ENCODE measurements at regions of chr15 and their contacts with region 1.

Region 1: DNA sequence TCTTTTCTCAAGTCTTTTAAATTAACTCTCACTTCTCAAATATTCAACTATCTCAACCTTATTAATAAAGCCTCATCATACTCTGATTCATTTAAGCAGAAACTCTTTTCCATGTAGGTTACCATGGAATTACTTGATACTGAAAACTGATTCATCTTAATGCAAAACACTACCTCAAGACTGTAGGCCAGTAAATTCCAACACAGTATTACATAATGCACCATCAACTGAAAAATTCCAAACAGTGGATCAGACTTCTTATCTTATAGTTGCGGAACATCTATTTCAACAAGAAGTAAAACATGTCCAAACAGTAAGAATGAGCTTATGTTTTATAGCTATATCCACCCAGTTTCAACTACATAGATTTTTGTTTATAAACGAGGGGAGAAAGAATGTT is 124.5 kb downstream of the PEAK1 start:
- DNase-seq: no peak
- ATAC-seq: no peak
- H3K4me3 ChIP-seq: no peak overlapping the region
- H3K27ac ChIP-seq: no peak overlapping the region
- H3K4me1 ChIP-seq: no peaks in the 10 kb centered on the region
- H3K27me3 ChIP-seq: no peaks in the 10 kb centered on the region
- CTCF ChIP-seq: no peak

Region 2: DNA sequence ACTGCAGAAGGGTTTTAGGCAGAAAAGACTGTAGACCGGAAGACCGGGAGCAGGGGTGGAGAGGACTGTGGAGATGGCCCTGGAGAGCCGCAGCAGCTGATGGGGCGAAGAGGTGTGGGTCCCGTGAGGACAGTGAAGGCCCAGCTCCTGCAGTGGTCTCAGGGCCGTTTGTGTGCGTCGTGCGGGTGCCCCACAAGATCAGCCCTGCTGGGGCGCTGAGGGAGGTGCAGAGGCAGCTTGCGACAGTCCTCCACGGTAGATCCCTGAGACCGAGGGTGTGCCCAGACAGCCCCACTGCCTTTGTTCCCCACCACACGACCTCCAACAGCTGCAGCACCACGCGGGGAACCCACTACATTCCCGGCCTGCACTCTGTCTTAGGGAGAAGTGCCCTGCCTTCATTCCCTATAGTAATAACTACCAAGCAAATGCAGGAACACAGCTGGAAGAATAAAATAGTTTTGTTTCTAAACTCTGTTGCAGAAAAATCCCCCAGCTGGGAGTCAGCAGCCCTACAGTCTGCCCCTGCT is 1025.7 kb after region 1 on chr15:
- CTCF ChIA-PET with region 1: no interaction called
- POLR2A ChIA-PET with region 1: interaction called, 14 read pairs
- in situ Hi-C with region 1: no loop called
- intact Hi-C with region 1: no loop called
- DNase-seq: no peak
- ATAC-seq: no peak
- H3K4me3 ChIP-seq: no peak overlapping the region
- H3K27ac ChIP-seq: no peak overlapping the region
- H3K4me1 ChIP-seq: peaks cover 7% of the 10 kb centered on the region
- H3K27me3 ChIP-seq: no peaks in the 10 kb centered on the region
- CTCF ChIP-seq: no peak